Head of caudate nucleus (tissue), 42 donors: ENCODE measurements at regions of chr15 and their contacts with region 1.

Region 1: GRCh38 chr15:96058103-96058851 is 272.2 kb upstream of the NR2F2 start:
- DNase-seq: no peak

Region 2: DNA sequence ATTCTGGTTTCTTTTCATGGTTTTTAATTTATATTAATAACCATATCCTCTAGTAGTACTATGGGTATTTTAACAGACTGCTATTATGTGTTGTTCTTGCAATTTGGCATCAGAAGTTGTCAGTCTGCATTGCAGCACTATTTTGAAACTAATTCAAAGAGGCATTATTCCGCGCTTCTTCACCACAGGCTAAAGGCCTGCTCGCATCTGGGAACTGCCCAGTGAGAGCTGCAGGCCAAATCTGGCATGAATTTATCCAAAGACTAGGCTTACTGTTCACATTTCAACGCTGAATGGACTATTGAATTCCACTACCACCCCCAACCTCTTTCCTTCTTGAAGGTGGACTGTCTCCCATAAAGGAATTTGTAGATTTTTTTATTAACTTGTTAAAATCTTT is 38.1 kb before region 1 on chr15:
- intact Hi-C with region 1: no loop called
- DNase-seq: peak in 36 of 42 donors; percentile 7 to 79 (median 44)

Region 3: GRCh38 chr15:96042734-96043224 is 15.5 kb before region 1 on chr15:
- intact Hi-C with region 1: loop called (anchors 1 kb)
- DNase-seq: no peak

Region 4: DNA sequence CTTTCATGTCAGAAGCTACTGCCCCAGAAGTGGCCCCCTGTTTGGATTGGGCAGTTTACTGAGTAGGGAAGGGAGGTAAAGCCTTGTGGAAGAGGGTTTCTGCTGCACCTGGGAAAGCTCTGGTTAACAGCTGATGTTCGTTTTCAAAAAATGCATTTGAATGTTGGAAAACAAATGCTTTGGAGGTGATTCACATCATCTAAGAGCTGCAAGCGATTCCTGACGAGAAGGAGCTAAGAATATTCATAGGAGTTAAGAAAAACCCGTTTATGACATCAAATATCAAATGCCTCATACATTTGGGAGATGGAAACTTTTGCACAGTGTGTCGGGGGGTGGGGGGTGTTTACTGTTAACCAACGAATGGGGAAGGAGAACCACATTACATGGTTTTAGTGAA is 88.4 kb after region 1 on chr15:
- intact Hi-C with region 1: no loop called
- DNase-seq: no peak

Region 5: DNA sequence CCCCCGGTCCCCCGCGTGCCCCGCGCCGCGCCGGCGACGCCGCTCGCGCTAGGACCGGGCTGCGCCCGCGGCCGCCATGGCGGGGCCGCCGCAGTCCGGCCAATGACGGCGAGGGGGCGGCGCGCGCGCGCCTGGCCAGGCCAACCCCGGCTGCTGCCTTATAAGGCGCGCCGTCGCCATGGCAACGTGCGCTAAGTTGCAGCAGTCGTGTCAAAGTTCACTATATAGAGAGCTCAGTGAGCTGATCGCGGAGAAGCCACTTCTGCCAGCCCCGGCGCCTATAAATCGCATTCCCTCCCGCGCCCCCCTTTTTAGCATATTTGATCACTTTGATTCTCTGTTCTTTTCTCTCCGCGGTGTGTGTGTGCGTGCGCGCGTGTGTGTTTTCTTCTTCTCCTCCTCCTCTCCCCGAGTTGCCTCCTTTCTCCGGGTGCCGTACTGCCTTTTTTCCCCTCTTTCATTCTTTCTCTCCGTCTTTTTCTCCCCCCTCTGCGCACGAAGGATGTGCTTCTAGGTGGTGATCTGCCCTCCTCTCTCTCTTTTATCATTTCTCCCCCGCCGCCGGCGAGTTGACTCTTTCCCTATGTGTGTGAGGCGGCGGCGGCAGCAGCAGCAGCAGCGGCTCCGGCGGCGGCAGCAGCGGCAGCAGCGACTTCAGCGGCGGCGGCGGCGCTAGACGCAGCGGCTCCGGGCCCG is 272.3 kb after region 1 on chr15 and contains the start of gene NR2F2:
- intact Hi-C with region 1: no loop called
- DNase-seq: peak; percentile 21 to 86 (median 74)